Left cardiac atrium (tissue), 4 donors: ENCODE measurements at regions of chr21 and their contacts with region 1.

Region 1: GRCh38 chr21:15729674-15730483 is at the start of gene USP25:
- DNase-seq: peak; percentile 91
- ATAC-seq: peak; percentile 97 to 99
- total RNA-seq, gene USP25: 39.4 to 56.8 TPM

Region 2: GRCh38 chr21:14382835-14383594 is 1346.9 kb before region 1 on chr21 and contains the start of gene HSPA13:
- intact Hi-C with region 1: loop called in 1 of 2 experiments (anchors 10 kb)
- DNase-seq: peak; percentile 100
- ATAC-seq: peak; percentile 99 to 100
- total RNA-seq, gene HSPA13: 17.6 to 27.4 TPM

Region 3: DNA sequence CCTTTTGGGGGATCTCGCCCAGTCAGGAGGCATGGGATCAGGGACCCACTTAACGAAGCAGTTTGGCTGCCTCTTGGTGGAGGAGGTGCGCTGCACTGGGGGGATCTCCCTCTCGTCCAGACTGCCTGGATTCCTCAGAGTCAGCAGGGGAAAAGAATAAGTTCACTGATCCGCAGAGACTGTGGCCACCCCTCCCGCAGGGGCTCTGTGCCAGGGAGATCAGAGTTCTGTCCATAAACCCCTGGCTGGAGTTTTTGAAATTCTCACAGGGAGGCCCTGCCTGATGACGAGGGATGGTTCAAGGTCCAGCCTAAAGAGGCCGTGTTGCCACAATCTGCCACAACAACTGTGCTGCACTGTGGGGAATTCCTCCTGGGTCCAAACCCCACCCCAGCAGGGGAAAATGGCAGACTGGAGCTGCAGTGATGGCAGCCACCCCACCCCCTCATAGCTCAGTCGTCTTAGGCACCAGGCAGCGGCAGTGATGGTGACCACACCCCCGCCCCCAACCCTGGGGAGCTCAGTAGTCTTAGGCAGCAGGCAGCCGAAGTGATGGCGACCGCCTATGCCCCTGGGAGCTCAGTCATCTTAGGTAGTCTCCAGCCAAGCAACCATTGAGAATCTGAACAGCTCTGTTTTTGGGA is 273.9 kb before region 1 on chr21:
- intact Hi-C with region 1: no loop called
- DNase-seq: no peak
- ATAC-seq: no peak

Region 4: GRCh38 chr21:15826147-15826780 is 96.4 kb after region 1 on chr21:
- intact Hi-C with region 1: loop called in 1 of 2 experiments (anchors 5 kb)
- DNase-seq: no peak
- ATAC-seq: peak; percentile 58 to 71